Posterior vena cava (tissue), 2 donors: ENCODE measurements at regions of chr9 and their contacts with region 1.

Region 1: DNA sequence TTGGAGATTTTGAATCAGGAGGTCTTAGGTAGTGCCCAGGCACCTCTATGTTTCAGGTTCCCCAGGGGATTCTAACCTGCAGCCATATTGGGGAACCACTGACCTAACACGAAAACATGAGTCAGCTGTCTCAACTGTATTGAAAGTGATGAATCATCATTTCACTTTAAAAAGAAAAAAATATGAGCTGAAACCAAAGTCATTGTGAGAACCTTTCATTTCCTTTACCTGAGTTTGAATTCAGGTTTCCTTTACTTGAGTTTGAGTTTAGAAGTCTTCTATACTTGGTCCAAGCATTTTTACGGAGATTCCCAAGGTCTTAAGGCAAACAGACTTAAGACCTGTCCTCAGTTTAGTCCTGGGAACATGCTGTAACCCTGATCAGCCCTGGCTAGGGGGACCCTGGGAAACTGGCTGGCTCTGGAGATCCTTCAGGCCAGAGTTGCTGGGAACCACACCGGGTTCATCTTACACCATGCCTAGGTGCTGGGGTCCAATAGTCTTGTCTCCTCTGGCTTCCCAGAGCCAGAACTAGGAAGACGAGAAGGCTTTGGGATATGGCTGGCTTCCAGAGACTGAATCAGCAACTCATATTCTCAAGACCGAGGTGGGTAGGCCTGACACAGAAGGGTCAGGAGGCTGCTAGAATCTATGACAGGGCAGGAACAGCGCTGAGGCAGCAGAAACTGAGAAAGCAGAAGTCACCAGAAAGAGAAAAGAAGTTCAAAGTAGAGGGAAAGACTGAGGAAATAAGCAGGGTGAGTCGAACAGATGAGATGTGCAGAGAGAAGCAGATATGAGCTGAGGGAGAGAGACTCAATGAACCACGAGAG is 16.4 kb upstream of the PDCD1LG2 start:
- DNase-seq: no peak

Region 2: GRCh38 chr9:3549225-3549624 is 1944.7 kb before region 1 on chr9:
- intact Hi-C with region 1: no loop called
- DNase-seq: no peak

Region 3: DNA sequence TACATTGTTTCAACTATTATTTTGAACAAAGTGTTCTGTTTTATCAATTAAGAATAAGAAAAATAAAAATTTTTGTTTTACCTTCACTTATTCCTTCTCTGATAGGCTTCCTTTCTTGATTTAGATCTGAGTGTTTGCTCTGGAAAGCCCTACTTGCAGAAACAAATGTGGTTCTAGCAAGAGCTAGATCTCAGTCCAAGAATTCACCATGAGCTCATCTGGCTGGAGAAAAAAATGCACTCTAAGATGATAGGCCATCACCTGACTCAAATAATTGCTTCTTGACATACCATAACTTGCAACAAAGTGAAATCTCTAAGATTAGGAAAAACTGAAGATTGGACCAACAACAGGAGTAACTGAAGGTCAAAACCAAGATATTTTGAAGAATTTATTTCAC is 183.0 kb before region 1 on chr9:
- intact Hi-C with region 1: loop called in 1 of 2 experiments (anchors 10 kb)
- DNase-seq: no peak

Region 4: GRCh38 chr9:5388026-5388819 is 105.7 kb before region 1 on chr9:
- intact Hi-C with region 1: no loop called
- DNase-seq: no peak

Region 5: DNA sequence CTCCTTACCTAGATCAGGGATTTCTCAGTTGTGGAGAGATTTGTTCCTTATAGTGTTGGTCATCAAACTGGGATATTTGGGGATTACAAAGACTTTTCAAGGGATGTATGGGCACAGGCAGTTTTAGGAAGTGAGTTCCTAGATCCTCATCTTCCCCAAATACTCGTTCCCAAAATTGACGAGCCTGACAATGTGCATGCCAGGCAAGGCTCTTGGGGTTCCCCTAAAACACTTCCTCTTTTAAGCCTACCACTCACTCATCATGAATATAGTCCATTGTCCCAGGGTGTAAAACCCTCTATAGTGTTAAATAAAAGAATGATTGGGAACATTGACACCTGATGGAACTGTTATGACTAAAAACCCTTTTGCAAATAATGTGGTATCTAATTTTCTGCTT is 42.8 kb after region 1 on chr9:
- intact Hi-C with region 1: no loop called
- DNase-seq: no peak